ENCODE measurements at regions of chr1 and their contacts with region 1.

Region 1: DNA sequence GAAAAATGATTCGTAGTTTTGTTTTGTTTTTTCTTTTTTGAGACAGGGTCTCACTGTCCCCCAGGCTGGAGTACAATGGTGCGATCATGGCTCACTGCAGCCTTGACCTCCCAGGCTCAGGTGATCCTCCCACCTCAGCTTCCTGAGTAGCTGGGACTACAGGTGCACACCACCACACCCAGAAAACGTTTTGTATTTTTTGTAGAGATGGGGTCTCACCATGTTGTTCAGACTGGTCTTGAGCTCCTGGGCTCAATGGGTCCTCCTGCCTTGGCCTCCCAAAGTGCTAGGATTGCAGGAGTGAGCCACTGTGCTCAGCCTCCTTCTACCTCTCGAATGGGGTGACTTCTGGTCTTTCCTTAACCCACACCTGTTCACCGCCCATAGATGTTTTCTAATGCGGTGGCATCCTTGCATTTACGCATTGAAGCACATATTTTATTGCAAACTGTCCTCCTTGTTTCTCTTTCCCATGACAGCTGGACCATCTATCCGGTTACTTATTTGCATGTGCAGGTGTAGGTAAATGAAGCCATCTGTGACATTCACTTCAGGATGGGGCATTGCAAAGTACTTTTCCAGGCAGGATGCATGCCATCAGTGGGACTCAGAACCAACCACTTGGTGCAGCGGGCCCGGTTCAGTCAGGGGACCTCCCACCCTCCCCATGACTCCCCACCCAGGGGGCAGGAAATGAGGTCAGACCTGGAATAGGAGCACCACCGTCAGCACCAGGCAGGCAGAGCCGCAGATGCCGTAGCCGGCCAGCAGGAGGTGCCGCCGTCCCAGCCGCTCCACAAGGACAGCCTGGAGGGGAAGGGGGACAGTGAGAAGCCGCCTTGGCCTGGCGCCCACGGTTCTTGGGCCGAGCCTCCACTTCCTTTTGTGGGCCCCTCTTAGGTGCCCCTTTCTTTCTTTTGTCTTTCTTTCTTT is 16.5 kb downstream of the SLC2A7 start:
- DNase-seq: no peak
- H3K4me3 ChIP-seq: no peak overlapping the region
- H3K27ac ChIP-seq: no peak overlapping the region
- H3K4me1 ChIP-seq: peaks cover 0 to 5% (median 5%) of the 10 kb centered on the region in 3 donors
- H3K27me3 ChIP-seq: no peaks in the 10 kb centered on the region
- CTCF ChIP-seq: peak in 5 of 6 experiments; percentile 30 to 65 (median 46)
- POLR2A ChIP-seq: no peak

Region 2: DNA sequence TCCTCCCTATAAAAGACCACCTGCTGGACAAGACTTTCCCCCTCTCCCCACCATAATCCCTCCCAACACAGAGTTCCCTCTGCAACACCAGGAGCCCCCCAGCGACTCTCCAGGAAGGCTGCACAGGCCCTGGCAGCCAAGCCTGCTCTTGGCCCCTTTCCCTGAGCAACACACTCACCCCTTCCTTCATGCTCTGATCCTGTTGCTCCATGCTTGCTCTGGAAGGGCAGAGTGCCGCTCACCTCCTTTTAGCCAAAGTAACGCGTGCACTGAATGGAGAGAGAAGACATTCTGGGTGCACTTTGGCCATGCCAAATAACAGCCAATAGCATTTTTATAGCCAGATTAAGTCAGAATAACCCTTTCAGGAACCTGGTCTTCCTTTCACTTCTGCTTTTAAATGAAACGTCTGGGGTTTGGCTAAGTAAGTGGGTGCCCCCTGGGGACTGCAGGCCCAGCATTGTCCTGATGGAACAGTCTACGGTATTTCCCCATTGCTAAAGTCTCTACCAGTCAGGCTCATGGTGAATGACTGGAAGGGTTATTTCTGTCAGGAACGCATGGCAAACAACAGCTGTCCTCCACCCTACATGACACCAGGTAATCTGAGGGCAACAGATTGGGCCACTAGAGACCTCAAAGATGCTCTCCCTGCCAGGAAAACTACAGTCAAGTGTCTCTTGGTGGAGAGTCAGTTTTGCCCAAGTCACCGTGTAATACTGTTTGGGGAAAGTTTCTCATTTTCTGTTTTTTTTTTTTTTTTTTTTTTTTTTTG is 59.8 kb after region 1 on chr1 and contains the start of gene SLC2A5:
- intact Hi-C with region 1: no loop called
- DNase-seq: no peak
- H3K4me3 ChIP-seq: peak within 1 kb of the TSS in 3 of 4 donors; percentile 7 to 47 (median 15)
- H3K27ac ChIP-seq: peak within 1 kb of the TSS; percentile 76 to 91 (median 88)
- H3K4me1 ChIP-seq: peaks cover 21 to 90% (median 58%) of the 10 kb centered on the region in 3 donors
- H3K27me3 ChIP-seq: no peaks in the 10 kb centered on the region
- CTCF ChIP-seq: no peak
- POLR2A ChIP-seq: no peak
- total RNA-seq, gene SLC2A5: 1.9 to 7.1 (median 4.2) TPM

Region 3: GRCh38 chr1:9101510-9102146 is 91.9 kb after region 1 on chr1:
- intact Hi-C with region 1: loop called (anchors 10 kb)
- DNase-seq: no peak
- H3K4me3 ChIP-seq: no peak overlapping the region
- H3K27ac ChIP-seq: no peak overlapping the region
- H3K4me1 ChIP-seq: peaks cover 0 to 9% (median 0%) of the 10 kb centered on the region in 3 donors
- H3K27me3 ChIP-seq: no peaks in the 10 kb centered on the region
- CTCF ChIP-seq: peak; percentile 18 to 72 (median 58)
- POLR2A ChIP-seq: no peak

Region 4: GRCh38 chr1:9121496-9122409 is 112.0 kb after region 1 on chr1:
- intact Hi-C with region 1: no loop called
- DNase-seq: no peak
- H3K4me3 ChIP-seq: no peak overlapping the region
- H3K27ac ChIP-seq: peak overlapping the region in 3 of 4 donors; percentile 1 to 54 (median 45)
- H3K4me1 ChIP-seq: peaks cover 9 to 89% (median 10%) of the 10 kb centered on the region in 3 donors
- H3K27me3 ChIP-seq: no peaks in the 10 kb centered on the region
- CTCF ChIP-seq: no peak
- POLR2A ChIP-seq: no peak

Region 5: GRCh38 chr1:9182784-9183257 is 173.1 kb after region 1 on chr1:
- intact Hi-C with region 1: no loop called
- DNase-seq: no peak
- H3K4me3 ChIP-seq: peak overlapping the region; percentile 61 to 90 (median 79)
- H3K27ac ChIP-seq: peak overlapping the region; percentile 67 to 86 (median 84)
- H3K4me1 ChIP-seq: peaks cover 18 to 44% (median 23%) of the 10 kb centered on the region in 3 donors
- H3K27me3 ChIP-seq: peaks cover 0 to 21% (median 0%) of the 10 kb centered on the region in 4 donors
- CTCF ChIP-seq: no peak
- POLR2A ChIP-seq: no peak

Measured in esophagus squamous epithelium (tissue), 5 donors.